ENCODE measurements at regions of chr11 and their contacts with region 1.

Region 1: DNA sequence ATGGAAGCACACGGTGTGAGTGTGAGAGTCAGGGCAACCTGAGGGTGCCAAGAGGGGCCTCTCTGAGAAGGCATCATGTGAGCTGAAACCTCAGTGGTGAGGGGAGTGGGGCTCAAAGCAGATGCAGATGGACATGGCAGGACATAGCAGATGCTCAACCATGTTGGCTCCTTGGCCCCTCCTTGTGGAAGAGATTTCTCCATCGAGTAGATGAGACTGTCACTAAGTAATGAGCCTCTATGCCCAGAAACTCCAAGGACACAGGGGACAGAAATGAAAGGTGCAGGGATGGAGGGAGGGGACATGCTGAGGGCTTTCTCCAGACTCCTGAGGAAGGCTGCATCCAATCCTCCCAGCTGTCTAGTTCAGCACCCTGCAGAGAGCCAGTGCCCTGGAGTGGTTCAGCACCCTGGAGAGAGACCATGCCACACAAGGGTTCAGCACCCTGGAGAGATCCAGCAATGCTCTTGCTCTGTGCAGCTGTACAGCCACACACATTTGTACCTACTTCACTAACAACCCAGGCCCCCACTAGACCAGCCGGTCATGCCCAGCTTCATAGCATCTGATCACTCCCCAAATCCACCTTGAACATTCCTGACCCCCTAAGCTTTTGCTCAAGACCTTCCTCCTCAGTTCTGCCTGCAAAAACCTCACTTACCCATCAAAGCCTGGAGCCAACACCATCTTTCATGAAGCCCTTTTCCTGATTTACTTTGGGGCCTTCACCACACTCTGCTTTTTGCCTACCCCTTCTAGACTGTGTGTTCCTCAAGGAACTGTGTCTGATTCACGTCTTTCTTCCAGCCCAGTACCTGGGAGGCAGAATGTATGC is 252.0 kb downstream of the CTTN start:
- DNase-seq: peak; percentile 57
- H3K4me3 ChIP-seq: no peak overlapping the region
- H3K27ac ChIP-seq: no peak overlapping the region
- H3K4me1 ChIP-seq: no peaks in the 10 kb centered on the region
- H3K27me3 ChIP-seq: no peaks in the 10 kb centered on the region
- CTCF ChIP-seq: no peak

Region 2: DNA sequence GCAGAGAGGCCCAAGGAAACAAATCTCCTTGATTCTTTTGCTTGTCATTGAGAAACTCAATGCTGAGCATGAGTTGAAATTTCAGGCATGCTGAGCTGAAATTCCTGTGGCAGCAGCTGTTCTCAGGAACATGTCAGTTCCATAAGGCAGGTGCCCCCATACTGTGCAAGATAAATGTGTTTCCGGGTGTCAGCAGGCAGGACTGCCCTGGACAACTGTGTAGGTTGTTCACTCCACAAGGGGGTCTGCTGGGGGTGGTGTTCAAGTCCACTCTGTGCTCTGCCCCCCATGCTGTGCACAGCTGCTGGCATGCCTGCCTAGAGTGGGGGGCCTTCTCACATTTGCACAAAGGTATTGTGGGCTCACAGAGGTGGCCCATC is 118.2 kb before region 1 on chr11:
- CTCF ChIA-PET with region 1: no interaction called
- dilution Hi-C with region 1: no loop called
- in situ Hi-C with region 1: no loop called
- intact Hi-C with region 1: no loop called
- DNase-seq: no peak
- H3K4me3 ChIP-seq: no peak overlapping the region
- H3K27ac ChIP-seq: no peak overlapping the region
- H3K4me1 ChIP-seq: no peaks in the 10 kb centered on the region
- H3K27me3 ChIP-seq: no peaks in the 10 kb centered on the region
- CTCF ChIP-seq: no peak

Region 3: DNA sequence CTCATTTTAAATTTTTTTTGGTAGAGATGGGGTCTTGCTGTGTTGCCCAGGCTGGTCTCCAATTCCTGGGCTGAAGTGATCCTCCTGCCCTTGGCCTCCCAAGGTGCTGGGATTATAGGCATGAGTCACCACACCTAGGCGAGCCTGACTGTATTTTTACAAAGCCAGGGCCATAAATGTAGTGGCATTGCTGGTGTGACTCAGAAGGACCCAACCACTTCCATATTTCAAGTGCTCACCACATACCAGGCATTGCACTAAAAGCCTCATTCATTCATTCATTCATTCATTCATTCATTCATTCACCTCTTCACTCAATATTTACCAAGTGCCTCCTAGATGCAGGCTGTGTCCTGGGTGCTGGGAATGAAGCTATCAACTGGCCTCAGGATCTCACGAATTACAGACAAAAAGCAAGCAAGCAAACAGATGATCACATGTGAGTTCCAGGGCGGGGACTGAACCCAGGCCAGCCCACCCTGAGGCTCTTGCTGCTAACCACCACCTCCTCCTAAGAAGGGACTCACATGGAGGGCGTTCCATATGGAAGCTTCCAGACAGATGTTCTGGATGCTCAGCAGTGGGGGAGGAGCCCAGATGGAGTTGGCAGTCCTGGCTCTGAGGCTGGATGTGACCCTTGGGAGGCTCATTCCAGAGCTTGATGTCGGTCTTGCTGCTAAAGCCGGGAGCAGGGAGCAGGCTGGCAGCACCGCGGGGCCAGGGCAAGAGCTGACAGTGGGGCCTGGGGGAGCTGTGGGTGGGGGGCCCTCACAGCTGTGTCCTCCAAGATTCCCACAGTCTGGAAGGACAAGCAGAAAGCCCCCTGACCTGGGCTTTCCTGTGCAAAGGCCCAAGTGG is 93.2 kb before region 1 on chr11:
- CTCF ChIA-PET with region 1: no interaction called
- dilution Hi-C with region 1: loop called (anchors 5 kb)
- in situ Hi-C with region 1: no loop called
- intact Hi-C with region 1: no loop called
- DNase-seq: peak; percentile 52
- H3K4me3 ChIP-seq: no peak overlapping the region
- H3K27ac ChIP-seq: no peak overlapping the region
- H3K4me1 ChIP-seq: no peaks in the 10 kb centered on the region
- H3K27me3 ChIP-seq: no peaks in the 10 kb centered on the region
- CTCF ChIP-seq: no peak

Region 4: DNA sequence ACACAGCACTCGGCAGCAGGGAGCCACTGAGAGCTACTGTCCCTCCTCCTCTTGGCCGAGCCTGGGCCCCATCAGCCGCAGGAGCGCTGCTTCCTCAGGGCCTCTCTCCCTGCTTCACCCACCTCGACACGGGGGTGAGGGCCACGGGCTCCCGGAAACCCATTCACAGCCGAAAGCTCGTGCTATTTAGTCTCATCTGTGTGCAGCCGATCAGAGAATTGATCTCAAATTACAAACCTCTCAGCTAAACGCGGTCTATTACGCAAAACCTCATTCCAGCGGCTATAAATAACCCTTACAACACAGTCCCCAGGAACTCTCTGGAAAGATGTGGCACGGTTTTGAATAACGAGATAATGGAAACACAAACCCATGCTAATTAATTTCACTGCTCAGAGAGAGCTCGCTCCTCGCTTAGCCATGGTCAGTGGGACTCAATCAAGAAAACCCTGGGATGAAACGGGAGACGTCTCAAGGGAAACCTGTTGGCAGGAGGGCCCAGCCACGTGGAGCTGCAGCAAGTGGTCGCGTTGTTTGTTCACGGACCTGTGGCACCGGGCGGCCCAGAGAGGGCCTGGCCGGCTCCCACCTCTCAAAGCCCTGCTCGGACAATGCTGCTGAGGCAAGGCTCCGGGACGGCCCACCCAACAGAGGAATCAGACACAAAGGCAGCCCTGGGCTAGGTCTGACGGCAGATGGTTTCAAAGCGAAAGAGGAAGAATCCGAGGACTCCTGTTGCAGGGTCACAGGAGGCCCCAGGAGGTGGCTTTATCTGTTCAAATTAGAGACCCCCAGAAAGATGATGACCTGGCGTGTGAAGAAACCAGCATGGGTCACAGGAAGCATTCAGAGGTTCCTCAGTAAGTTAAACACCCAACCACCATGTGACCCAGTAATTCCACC is 41.5 kb before region 1 on chr11:
- CTCF ChIA-PET with region 1: no interaction called
- dilution Hi-C with region 1: no loop called
- in situ Hi-C with region 1: no loop called
- intact Hi-C with region 1: loop called (anchors 10 kb)
- DNase-seq: no peak
- H3K4me3 ChIP-seq: no peak overlapping the region
- H3K27ac ChIP-seq: no peak overlapping the region
- H3K4me1 ChIP-seq: peaks cover 14% of the 10 kb centered on the region
- H3K27me3 ChIP-seq: no peaks in the 10 kb centered on the region
- CTCF ChIP-seq: no peak

Region 5: GRCh38 chr11:70699294-70700221 is 49.3 kb after region 1 on chr11:
- CTCF ChIA-PET with region 1: no interaction called
- dilution Hi-C with region 1: loop called (anchors 5 kb)
- in situ Hi-C with region 1: no loop called
- intact Hi-C with region 1: no loop called
- DNase-seq: no peak
- H3K4me3 ChIP-seq: no peak overlapping the region
- H3K27ac ChIP-seq: no peak overlapping the region
- H3K4me1 ChIP-seq: no peaks in the 10 kb centered on the region
- H3K27me3 ChIP-seq: no peaks in the 10 kb centered on the region
- CTCF ChIP-seq: no peak

Region 6: DNA sequence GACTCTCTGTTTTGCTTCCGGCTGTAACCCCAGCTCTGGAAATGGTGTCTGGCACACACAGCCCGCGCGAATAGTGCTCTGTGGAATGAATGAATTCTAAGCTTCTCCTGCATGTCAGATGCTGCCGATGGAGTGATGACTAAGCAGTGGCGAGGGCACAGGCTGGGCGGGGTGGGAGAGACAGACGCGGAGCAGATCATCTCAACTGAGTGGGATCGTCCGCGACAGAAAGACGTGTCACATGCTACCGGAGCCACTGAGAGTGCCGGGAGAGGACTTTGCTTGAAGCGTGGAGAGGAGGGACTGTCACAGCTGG is 82.5 kb after region 1 on chr11:
- CTCF ChIA-PET with region 1: no interaction called
- dilution Hi-C with region 1: loop called (anchors 5 kb)
- in situ Hi-C with region 1: no loop called
- intact Hi-C with region 1: no loop called
- DNase-seq: no peak
- H3K4me3 ChIP-seq: no peak overlapping the region
- H3K27ac ChIP-seq: no peak overlapping the region
- H3K4me1 ChIP-seq: no peaks in the 10 kb centered on the region
- H3K27me3 ChIP-seq: no peaks in the 10 kb centered on the region
- CTCF ChIP-seq: no peak

Region 7: DNA sequence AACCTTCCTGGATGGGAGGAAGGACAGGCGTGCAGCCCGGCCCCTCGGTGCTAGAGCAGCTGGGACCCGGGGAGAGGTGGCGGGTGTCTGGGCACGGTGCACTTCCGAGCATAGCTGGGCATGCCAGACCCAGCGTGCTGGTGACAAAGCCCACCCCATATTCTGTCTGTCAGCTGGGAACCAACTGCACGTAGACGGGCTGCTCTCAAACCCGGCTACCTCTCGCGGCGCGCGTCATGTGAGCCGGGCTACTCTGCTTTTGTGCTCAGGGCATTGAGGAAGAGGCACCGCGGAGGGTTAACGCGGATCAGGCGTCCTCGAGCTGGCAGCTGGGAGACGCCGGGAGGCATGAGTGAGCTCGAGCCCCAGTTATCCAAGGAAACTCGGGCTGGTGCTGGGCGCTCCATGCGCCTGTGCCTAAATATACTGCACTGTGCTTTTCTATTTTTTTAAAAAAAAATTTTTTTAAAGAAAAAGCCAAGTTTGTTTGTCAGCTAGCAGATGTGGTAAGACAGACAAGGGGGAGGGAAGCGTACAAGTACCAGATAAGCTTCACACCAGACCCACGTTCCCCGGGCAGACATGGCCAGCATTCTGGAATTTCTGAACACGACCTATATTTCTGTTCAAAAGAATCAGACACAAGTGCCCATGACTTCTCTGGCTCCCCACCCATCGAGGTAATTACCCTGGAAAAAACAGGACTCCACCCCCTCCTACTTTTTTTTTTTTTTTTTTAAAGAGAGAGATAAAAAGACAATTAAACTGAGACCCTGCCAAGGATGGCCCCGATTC is 176.4 kb after region 1 on chr11:
- CTCF ChIA-PET with region 1: no interaction called
- dilution Hi-C with region 1: loop called (anchors 5 kb)
- in situ Hi-C with region 1: no loop called
- intact Hi-C with region 1: no loop called
- DNase-seq: no peak
- H3K4me3 ChIP-seq: peak overlapping the region in 2 of 3 experiments; percentile 18 to 29
- H3K27ac ChIP-seq: no peak overlapping the region
- H3K4me1 ChIP-seq: peaks cover 6% of the 10 kb centered on the region
- H3K27me3 ChIP-seq: peaks cover 4% of the 10 kb centered on the region
- CTCF ChIP-seq: no peak